Activated T-helper 2 cell treated with anti-CD3 and anti-CD28 coated beads, Interferon-gamma antibody, Interleukin-2, Interleukin-4, amounts not matched to agents 10 μg/mL and 5 μg/mL and 100 μg/mL, durations not matched to agents 14 hours and 24 hours and 36 hours (primary cell): ENCODE measurements at regions of chr13 and their contacts with region 1.

Region 1: GRCh38 chr13:50801087-50801931 is 42.2 kb downstream of the DLEU7 start:
- DNase-seq: peak; percentile 53
- H3K4me3 Mint-ChIP-seq: no peak overlapping the region
- H3K27ac Mint-ChIP-seq: no peak overlapping the region
- H3K4me1 Mint-ChIP-seq: peaks cover 20% of the 10 kb centered on the region
- H3K27me3 Mint-ChIP-seq: peaks cover 6% of the 10 kb centered on the region

Region 2: GRCh38 chr13:50672018-50672417 is 129.3 kb before region 1 on chr13:
- intact Hi-C with region 1: no loop called
- DNase-seq: no peak
- H3K4me3 Mint-ChIP-seq: no peak overlapping the region
- H3K27ac Mint-ChIP-seq: no peak overlapping the region
- H3K4me1 Mint-ChIP-seq: no peaks in the 10 kb centered on the region
- H3K27me3 Mint-ChIP-seq: peaks cover 30% of the 10 kb centered on the region

Region 3: DNA sequence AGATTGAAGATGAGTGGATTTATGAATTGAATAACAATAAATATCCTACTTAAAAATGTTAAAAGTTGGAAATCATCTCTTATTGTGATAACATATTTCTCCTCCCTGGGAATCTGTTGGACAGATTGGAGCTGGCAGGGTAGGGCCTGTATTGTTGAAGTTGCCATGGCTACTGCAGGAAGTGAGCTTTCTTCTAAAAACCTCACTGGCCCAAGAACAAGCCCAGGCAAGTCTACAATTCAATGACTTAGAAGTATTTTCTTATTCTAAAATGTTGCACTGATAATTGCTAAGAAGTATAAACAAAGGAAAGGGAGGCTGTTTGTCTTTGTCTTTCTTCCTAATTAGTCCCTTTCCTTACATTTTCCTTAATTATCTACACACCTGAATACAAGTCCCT is 69.9 kb before region 1 on chr13:
- intact Hi-C with region 1: no loop called
- DNase-seq: no peak
- H3K4me3 Mint-ChIP-seq: no peak overlapping the region
- H3K27ac Mint-ChIP-seq: no peak overlapping the region
- H3K4me1 Mint-ChIP-seq: peaks cover 5% of the 10 kb centered on the region
- H3K27me3 Mint-ChIP-seq: peaks cover 16% of the 10 kb centered on the region

Region 4: DNA sequence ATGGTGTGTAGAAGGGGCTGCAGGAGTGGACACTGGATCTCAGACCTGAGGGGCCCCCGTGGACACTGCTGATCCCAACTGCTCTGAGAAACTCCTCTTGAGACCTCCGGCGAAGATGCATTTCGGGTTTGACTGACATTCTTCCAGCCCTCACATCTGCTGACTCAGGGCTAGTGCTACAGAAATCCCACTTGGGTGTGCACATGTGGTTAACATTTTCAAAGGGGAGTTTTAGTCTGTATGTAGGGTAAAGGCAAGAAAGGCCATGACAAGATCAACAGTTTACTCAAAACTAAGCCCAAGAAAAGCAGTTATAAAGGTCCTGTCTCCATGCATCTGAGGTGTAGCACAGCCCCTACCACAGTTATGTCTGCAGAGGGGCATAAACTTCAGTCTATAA is 10.9 kb after region 1 on chr13:
- intact Hi-C with region 1: no loop called
- DNase-seq: no peak
- H3K4me3 Mint-ChIP-seq: no peak overlapping the region
- H3K27ac Mint-ChIP-seq: no peak overlapping the region
- H3K4me1 Mint-ChIP-seq: peaks cover 22% of the 10 kb centered on the region
- H3K27me3 Mint-ChIP-seq: peaks cover 11% of the 10 kb centered on the region

Region 5: DNA sequence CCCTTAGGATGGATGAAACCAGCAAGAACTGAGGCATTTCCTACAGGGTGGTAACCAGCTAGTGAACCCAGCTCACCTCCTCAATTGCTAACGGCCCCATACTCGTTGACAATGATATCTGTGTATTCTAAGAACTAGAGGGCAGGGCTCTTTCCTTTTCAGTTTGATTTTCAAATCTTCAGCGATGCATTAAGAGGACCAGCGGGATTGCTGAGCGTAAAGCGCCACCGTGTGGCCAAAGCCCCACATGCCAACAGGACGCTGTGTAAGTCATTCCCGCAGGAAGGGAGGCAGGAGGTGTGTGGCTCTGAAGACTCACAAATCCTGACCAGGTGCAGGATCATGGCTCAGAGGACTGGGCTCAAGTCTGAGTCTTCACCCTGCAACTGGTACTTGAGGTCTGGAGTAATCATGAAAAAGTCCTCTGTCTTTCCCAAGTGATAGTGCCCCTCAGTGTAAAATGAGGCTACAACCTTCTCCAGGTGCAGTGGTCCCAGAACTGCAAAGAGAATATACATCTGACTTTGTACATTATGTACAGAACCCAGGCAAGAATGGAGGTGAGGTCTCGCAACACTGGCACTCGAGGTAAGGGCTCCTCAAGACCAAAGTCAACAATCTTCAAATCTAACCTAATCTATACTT is 268.8 kb after region 1 on chr13:
- intact Hi-C with region 1: loop called (anchors 5 kb)
- DNase-seq: peak; percentile 72
- H3K4me3 Mint-ChIP-seq: no peak overlapping the region
- H3K27ac Mint-ChIP-seq: no peak overlapping the region
- H3K4me1 Mint-ChIP-seq: peaks cover 29% of the 10 kb centered on the region
- H3K27me3 Mint-ChIP-seq: peaks cover 16% of the 10 kb centered on the region